ENCODE measurements at regions of chr16 and their contacts with region 1.

Region 1: DNA sequence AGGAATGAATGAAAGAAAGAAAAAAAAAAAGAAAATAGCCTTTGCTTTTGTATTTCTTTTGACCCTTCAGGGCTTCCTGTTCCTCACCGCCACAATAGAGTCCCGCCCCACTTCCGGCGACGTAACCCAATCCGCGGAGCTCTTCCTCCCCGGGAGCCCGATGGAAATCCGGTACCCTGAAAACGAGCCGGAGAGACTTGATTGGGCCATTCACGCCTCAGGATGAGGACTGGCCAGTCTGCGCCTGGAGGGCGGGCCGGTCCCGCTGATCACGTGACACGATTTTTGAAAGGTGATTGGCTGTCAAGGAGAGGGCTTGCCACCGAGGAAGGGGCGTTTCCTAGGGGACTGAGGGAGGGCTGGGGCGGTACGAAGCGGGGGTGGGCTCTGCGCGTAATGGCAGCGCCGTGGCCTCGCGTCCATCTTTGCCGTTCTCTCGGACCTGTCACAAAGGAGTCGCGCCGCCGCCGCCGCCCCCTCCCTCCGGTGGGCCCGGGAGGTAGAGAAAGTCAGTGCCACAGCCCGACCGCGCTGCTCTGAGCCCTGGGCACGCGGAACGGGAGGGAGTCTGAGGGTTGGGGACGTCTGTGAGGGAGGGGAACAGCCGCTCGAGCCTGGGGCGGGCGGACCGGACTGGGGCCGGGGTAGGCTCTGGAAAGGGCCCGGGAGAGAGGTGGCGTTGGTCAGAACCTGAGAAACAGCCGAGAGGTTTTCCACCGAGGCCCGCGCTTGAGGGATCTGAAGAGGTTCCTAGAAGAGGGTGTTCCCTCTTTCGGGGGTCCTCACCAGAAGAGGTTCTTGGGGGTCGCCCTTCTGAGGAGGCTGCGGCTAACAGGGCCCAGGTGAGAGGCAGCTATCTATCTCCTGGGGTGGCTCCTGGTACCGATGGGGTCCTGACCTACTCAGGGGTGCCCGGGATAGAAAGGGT is at the starts of genes PSME3IP1 and RSPRY1:
- DNase-seq: peak; percentile 100
- ATAC-seq: peak; percentile 91
- H3K4me3 ChIP-seq: peak within 1 kb of the TSS; percentile 86 to 99 (median 89)
- H3K4me3 Mint-ChIP-seq: peak within 1 kb of the TSS; percentile 90
- H3K27ac ChIP-seq: peak within 1 kb of the TSS; percentile 87 to 92
- H3K27ac Mint-ChIP-seq: peak within 1 kb of the TSS; percentile 98
- H3K4me1 ChIP-seq: peaks cover 26 to 28% of the 10 kb centered on the region in 2 donors
- H3K4me1 Mint-ChIP-seq: peaks cover 61% of the 10 kb centered on the region
- H3K27me3 ChIP-seq: no peaks in the 10 kb centered on the region
- H3K27me3 Mint-ChIP-seq: no peaks in the 10 kb centered on the region
- CTCF ChIP-seq: no peak
- total RNA-seq, gene PSME3IP1: 156 and 166 TPM in 2 replicates
- total RNA-seq, gene RSPRY1: 37.7 and 38.4 TPM in 2 replicates

Region 2: GRCh38 chr16:56425439-56425832 is 760.8 kb before region 1 on chr16 and contains the start of gene AMFR:
- CTCF ChIA-PET with region 1: no interaction called
- POLR2A ChIA-PET with region 1: interaction called, 4 read pairs
- intact Hi-C with region 1: loop called (anchors 10 kb)
- DNase-seq: peak; percentile 90
- ATAC-seq: peak; percentile 88
- H3K4me3 ChIP-seq: peak within 1 kb of the TSS; percentile 69 to 78 (median 70)
- H3K4me3 Mint-ChIP-seq: peak within 1 kb of the TSS; percentile 98
- H3K27ac ChIP-seq: peak within 1 kb of the TSS; percentile 72 to 81
- H3K27ac Mint-ChIP-seq: peak within 1 kb of the TSS; percentile 97
- H3K4me1 ChIP-seq: peaks cover 32 to 36% of the 10 kb centered on the region in 2 donors
- H3K4me1 Mint-ChIP-seq: peaks cover 34% of the 10 kb centered on the region
- H3K27me3 ChIP-seq: no peaks in the 10 kb centered on the region
- H3K27me3 Mint-ChIP-seq: no peaks in the 10 kb centered on the region
- CTCF ChIP-seq: peak; percentile 62
- total RNA-seq, gene AMFR: 225 and 234 TPM in 2 replicates

Region 3: GRCh38 chr16:57091975-57092785 is 94.0 kb before region 1 on chr16 and contains the start of gene CPNE2:
- CTCF ChIA-PET with region 1: no interaction called
- POLR2A ChIA-PET with region 1: no interaction called
- intact Hi-C with region 1: loop called (anchors 5 kb)
- DNase-seq: peak; percentile 53
- ATAC-seq: peak; percentile 66
- H3K4me3 ChIP-seq: peak within 1 kb of the TSS in 4 of 5 experiments; percentile 28 to 66 (median 54)
- H3K4me3 Mint-ChIP-seq: peak within 1 kb of the TSS; percentile 76
- H3K27ac ChIP-seq: no peak within 1 kb of the TSS
- H3K27ac Mint-ChIP-seq: peak within 1 kb of the TSS; percentile 20
- H3K4me1 ChIP-seq: peaks cover 13 to 14% of the 10 kb centered on the region in 2 donors
- H3K4me1 Mint-ChIP-seq: peaks cover 11% of the 10 kb centered on the region
- H3K27me3 ChIP-seq: peaks cover 0 to 36% (median 10%) of the 10 kb centered on the region in 4 experiments
- H3K27me3 Mint-ChIP-seq: peaks cover 26% of the 10 kb centered on the region
- CTCF ChIP-seq: no peak
- total RNA-seq, gene CPNE2: 2.9 and 3.9 TPM in 2 replicates

Region 4: GRCh38 chr16:57265850-57266530 is 79.8 kb after region 1 on chr16:
- CTCF ChIA-PET with region 1: no interaction called
- POLR2A ChIA-PET with region 1: no interaction called
- intact Hi-C with region 1: no loop called
- DNase-seq: no peak
- ATAC-seq: no peak
- H3K4me3 ChIP-seq: no peak overlapping the region
- H3K4me3 Mint-ChIP-seq: no peak overlapping the region
- H3K27ac ChIP-seq: no peak overlapping the region
- H3K27ac Mint-ChIP-seq: no peak overlapping the region
- H3K4me1 ChIP-seq: peaks cover 0 to 5% of the 10 kb centered on the region in 2 donors
- H3K4me1 Mint-ChIP-seq: peaks cover 3% of the 10 kb centered on the region
- H3K27me3 ChIP-seq: no peaks in the 10 kb centered on the region
- H3K27me3 Mint-ChIP-seq: no peaks in the 10 kb centered on the region
- CTCF ChIP-seq: no peak

Region 5: DNA sequence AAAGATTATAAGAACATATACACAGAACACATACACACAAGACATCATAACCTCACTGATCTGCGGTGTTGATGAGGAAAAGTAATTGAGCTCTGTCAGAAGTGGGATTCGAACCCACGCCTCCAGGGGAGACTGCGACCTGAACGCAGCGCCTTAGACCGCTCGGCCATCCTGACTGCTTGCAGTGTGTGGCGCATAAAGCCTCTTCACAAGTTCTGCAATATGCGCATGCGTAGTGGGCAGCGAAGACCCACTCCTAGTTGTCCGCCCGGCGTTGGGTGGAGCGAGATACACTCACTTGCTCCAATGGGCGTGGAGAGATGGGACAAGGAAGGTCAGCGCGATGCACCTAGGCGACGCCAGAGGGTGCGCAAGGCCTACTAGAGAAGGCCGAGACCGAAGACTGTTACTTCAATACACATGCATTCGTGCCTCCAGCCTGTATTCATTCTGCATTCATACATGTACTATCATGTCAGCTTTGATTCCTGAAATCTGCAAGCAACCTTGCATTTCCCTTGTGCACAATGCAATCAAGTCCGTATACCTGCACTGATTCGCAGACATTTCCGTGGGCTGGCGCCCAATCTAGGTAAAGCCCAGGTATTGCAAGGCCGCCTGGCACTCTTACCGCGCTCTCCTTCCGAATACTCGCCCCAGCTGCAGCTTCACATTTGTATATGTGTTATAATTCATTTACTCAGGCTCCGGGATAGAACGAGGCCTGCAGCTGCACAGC is 114.3 kb after region 1 on chr16:
- CTCF ChIA-PET with region 1: no interaction called
- POLR2A ChIA-PET with region 1: interaction called, 4 read pairs
- intact Hi-C with region 1: loop called (anchors 1 kb)
- DNase-seq: peak; percentile 100
- ATAC-seq: peak; percentile 93
- H3K4me3 ChIP-seq: peak overlapping the region; percentile 59 to 89 (median 71)
- H3K4me3 Mint-ChIP-seq: no peak overlapping the region
- H3K27ac ChIP-seq: peak overlapping the region; percentile 76 to 85
- H3K27ac Mint-ChIP-seq: no peak overlapping the region
- H3K4me1 ChIP-seq: peaks cover 14 to 31% of the 10 kb centered on the region in 2 donors
- H3K4me1 Mint-ChIP-seq: peaks cover 19% of the 10 kb centered on the region
- H3K27me3 ChIP-seq: no peaks in the 10 kb centered on the region
- H3K27me3 Mint-ChIP-seq: no peaks in the 10 kb centered on the region
- CTCF ChIP-seq: peak; percentile 92

Region 6: DNA sequence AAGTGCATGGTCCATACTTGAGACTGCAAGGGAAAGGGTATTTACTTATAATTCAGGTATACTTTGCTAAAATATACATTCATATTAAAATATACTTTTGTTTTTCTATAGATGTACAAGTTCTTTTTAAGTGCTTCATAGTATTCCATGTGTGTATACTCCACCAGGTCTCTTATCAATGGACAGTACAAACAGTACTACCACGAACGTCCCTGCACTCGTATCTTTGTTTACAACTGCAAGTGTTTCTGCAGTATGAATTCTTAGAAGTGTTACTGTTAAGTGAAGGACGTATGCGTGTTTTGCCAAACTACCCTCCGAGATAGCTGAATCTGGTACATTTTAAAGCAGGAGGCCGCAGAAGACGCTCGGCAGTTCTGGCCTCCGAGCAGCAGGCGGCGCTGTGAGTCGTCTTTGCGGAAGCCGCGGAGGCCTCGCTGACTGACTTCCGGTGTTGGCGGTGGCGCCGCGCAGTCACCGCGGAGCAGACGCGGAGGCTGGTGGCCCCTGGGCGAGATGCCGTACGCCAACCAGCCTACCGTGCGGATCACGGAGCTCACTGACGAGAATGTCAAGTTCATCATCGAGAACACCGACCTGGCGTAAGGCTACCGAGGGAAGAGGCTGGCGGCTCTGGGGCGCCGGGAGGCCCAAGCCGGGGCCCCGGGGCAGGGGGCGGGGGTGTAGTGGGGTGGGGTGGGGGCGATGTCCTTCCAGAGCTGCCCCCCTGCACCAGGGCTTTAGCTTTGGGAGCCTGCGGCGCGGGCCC is 276.2 kb after region 1 on chr16 and contains the start of gene POLR2C:
- CTCF ChIA-PET with region 1: interaction called, 4 read pairs
- POLR2A ChIA-PET with region 1: no interaction called
- intact Hi-C with region 1: loop called (anchors 5 kb)
- DNase-seq: peak; percentile 93
- ATAC-seq: peak; percentile 98
- H3K4me3 ChIP-seq: peak within 1 kb of the TSS; percentile 59 to 88 (median 82)
- H3K4me3 Mint-ChIP-seq: peak within 1 kb of the TSS; percentile 100
- H3K27ac ChIP-seq: peak within 1 kb of the TSS; percentile 42 to 59
- H3K27ac Mint-ChIP-seq: peak within 1 kb of the TSS; percentile 99
- H3K4me1 ChIP-seq: peaks cover 12% of the 10 kb centered on the region in 2 donors
- H3K4me1 Mint-ChIP-seq: peaks cover 29% of the 10 kb centered on the region
- H3K27me3 ChIP-seq: no peaks in the 10 kb centered on the region
- H3K27me3 Mint-ChIP-seq: no peaks in the 10 kb centered on the region
- CTCF ChIP-seq: peak; percentile 95
- total RNA-seq, gene POLR2C: 57.8 and 61.6 TPM in 2 replicates

Region 7: DNA sequence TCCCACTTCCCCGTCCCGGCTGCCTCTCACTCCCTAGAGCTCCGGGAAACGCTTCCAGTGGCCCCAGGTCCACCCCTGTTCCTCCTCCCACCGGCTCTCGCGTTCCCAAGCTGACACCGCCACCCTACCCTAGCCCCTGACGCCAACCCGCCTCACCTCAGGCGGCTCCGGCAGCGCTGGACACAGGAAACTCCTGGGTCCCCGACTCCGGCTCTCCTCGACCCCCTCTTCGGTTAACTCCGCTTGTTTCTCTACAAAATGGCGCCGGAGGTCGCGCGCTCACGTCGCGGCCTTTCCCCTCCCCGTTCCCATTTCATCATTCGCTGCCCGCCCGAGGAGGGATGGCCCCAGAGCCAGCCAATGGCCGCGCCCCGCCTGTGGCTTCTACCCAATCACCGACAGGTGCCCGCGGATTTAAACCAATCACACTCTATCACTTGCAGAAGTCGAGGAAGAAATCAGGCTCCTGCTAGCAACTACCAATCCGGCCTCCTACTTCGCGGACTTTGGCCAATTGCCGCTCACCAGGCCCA is 1443.4 kb after region 1 on chr16 and contains the start of gene CNOT1:
- CTCF ChIA-PET with region 1: no interaction called
- POLR2A ChIA-PET with region 1: no interaction called
- intact Hi-C with region 1: loop called (anchors 5 kb)
- DNase-seq: no peak
- ATAC-seq: peak; percentile 80
- H3K4me3 ChIP-seq: peak within 1 kb of the TSS; percentile 54 to 100 (median 100)
- H3K4me3 Mint-ChIP-seq: peak within 1 kb of the TSS; percentile 93
- H3K27ac ChIP-seq: peak within 1 kb of the TSS; percentile 99 to 100
- H3K27ac Mint-ChIP-seq: peak within 1 kb of the TSS; percentile 97
- H3K4me1 ChIP-seq: peaks cover 19 to 26% of the 10 kb centered on the region in 2 donors
- H3K4me1 Mint-ChIP-seq: peaks cover 40% of the 10 kb centered on the region
- H3K27me3 ChIP-seq: no peaks in the 10 kb centered on the region
- H3K27me3 Mint-ChIP-seq: no peaks in the 10 kb centered on the region
- CTCF ChIP-seq: no peak
- total RNA-seq, gene CNOT1: 246 and 268 TPM in 2 replicates

Measured in B cell (primary cell).